ENCODE measurements at regions of chr10 and their contacts with region 1.

Region 1: GRCh38 chr10:95363303-95363912 is 72.6 kb upstream of the PDLIM1 start:
- DNase-seq: no peak

Region 2: GRCh38 chr10:95183271-95184230 is 179.9 kb before region 1 on chr10:
- intact Hi-C with region 1: loop called (anchors 5 kb)
- DNase-seq: peak; percentile 95

Region 3: DNA sequence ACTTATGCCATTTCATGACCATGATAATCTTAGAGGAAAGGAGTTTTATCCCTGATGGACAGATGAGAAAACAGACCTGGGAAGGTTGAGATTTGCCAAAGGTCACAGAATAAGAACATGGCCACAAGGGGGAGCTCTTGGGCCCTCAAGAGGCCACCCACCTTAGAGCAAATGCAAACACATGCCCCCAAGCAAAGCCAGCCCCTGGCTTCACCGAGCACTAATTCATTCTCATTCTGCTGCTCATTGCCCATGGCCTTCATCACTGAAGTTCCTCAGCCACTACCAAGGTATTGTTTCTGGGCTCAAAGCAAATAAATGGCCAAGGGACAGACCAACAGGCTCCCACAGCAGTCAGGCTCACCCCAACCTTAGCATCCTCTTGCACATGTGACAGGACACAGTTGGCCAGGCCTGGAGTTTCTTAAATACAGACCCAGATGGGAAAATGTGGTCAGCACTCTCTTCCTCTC is 116.8 kb before region 1 on chr10:
- intact Hi-C with region 1: loop called (anchors 1 kb)
- DNase-seq: no peak

Region 4: GRCh38 chr10:95279042-95279820 is 84.2 kb before region 1 on chr10:
- intact Hi-C with region 1: no loop called
- DNase-seq: no peak

Region 5: DNA sequence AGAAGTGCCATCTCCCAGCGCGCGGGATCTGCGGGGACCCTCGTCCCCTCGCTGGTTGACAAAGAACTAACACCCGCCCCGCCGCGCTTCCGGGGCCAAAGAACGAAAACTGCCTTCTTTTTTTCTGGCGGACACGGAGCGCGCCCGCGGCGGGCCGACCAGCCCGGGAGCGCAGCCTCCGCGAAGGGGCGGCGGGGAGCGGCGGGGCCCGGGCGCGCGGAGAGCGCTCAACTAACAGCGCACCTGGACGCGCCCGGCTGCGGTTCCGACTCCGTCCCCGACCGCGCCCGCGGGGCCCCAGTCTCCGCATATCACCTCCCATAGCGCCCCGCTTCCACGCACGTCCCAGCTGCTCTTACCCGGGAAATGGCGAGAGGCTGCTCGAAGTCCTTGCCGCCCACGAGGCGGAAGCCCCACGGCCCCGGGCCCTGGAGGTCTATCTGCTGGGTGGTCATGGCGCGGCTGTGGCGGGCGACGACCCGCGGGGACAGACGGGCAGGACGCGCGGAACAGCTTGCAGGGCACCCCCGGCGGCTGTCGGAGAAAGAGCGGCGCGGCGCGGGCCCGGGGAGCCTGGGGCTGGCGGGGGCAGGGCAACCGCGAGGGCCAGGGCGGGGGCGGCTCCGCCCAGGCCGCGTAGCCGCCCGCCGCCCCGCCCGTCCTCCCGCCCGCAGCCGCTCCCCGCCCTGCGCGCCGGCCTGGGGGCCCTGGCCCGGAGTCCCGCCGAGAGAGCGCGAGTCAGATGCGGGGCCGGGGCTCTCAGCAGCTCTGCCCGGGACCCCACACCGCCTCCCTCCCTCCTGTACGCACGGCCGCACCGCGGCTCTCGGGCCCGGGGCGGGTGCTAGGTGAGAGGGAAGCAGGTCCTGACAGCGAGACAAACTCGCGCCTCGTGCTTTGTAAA is 72.7 kb before region 1 on chr10 and contains the start of gene PDLIM1:
- intact Hi-C with region 1: loop called (anchors 5 kb)
- DNase-seq: peak; percentile 84
- total RNA-seq, gene PDLIM1: 334 TPM

Region 6: GRCh38 chr10:95474228-95475002 is 111.0 kb after region 1 on chr10:
- intact Hi-C with region 1: no loop called
- DNase-seq: no peak

Region 7: GRCh38 chr10:95618126-95618525 is 254.7 kb after region 1 on chr10:
- intact Hi-C with region 1: no loop called
- DNase-seq: no peak